Motor neuron (in vitro differentiated cells): ENCODE measurements at regions of chr12 and their contacts with region 1.

Region 1: DNA sequence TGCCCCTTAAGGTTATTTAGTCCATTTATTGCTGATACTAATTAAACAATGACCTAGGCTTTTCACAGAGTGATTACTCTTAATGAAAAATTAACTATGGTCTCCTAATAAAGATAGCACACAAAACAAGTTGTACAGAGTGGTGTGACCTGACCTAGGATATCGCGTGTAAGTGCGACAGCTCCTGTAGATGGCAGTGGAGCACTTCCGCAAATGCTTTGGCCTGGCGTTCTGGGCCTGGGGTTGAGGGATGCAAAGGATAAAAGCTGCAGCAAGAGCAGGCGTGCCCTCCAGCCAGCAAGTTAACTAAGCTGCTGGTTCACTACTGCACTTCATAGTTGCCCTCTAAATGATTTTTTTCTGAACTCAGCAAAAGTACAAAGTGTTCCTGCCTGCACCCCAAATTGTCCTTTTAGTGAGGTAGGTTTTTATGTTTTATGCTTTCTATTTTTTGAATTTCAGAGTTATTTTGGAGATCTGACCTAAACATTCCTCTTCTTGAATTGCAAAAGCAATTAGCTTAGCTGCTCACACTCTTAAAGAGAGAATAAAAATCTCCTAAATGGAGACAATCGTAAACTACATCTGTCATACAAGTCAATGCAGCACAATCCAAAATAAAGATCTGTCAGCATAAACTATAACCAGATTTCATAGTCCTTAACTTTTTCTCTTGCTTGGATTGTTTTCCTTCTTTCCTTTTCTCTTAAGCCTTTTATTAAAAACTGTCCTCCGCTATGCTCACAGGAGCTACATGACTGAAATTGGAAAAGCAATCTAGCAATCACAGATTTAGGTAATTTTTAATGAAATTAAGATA is 379.6 kb downstream of the LRIG3 start:
- ATAC-seq: peak; percentile 95 to 100 (median 99)
- H3K4me3 ChIP-seq: no peak overlapping the region
- H3K27ac ChIP-seq: no peak overlapping the region
- H3K4me1 ChIP-seq: peaks cover 0 to 8% of the 10 kb centered on the region in 2 donors

Region 2: DNA sequence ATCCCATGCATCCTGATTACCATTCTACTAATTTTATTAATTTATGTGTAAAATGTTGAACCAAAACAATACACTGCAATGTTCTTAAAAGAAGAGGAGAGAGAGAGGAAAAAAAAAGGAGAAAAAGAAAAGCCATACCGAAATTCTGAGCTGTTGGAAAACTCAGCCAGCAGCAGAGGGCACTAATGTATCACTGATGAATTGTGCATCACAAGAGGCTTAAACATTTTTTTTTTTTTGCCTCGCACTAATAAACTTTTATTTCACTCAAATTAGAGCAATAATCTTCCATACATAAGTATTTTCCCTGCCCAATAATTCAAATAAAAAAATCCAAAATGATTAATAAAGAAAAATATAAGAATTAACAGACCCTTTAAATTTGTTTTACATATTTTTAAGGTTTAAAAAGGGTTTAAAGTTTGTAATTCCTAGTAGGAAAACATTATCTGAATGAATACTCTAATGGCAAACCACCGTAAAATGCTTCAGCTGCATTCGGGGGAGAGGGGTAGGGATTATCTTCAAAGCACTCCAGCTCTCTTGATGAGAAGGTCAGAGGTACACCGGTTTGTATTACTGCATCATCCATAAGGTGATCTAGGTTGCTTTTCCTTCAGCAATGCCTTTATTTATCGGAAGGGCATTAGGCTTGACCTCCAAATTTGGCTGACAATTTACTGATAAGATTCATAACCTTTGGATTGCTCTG is 557.4 kb before region 1 on chr12:
- in situ Hi-C with region 1: loop called in 1 of 9 experiments (anchors 25 kb)
- ATAC-seq: peak in 1 of 8 experiments; percentile 23
- H3K4me3 ChIP-seq: no peak overlapping the region
- H3K27ac ChIP-seq: no peak overlapping the region
- H3K4me1 ChIP-seq: no peaks in the 10 kb centered on the region

Region 3: DNA sequence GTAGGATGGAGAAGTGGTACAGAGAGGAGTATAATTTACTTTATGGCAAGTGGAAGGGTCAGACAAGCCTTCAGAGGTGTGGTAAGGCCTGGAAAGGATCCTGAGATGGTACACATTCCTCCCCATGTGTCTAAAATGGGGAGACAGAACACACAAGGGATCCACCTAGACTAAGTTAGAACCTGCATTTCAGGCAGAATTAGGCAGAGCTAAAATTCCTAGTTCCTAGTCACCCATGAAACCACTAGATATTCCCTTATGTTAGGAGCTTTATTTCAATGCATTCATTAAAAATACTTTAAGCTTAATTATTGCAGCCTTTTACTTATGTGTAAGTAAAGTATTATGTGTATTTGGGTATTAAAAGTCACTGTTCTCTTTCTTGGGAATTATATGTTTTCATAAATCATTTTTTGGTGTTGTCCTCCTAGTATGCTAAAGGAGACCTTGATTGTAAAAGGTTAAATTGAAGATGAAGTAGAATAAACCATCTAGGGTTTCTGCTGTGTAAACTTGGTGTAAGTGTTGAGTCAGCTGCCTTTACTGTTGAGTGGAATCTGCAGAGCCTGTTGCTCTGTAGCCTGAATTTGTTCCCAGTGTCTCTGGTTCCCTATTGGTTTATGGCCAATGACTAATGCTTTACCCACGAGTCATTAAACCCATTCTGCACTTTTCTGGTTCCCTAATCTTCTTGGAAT is 176.2 kb before region 1 on chr12:
- in situ Hi-C with region 1: loop called in 3 of 9 experiments (anchors 10 to 25 kb)
- ATAC-seq: peak in 7 of 8 experiments; percentile 51 to 96 (median 60)
- H3K4me3 ChIP-seq: no peak overlapping the region
- H3K27ac ChIP-seq: no peak overlapping the region
- H3K4me1 ChIP-seq: no peaks in the 10 kb centered on the region

Region 4: GRCh38 chr12:58888131-58888783 is 347.6 kb after region 1 on chr12:
- in situ Hi-C with region 1: loop called in 1 of 9 experiments (anchors 25 kb)
- ATAC-seq: peak in 3 of 8 experiments; percentile 55 to 63 (median 57)
- H3K4me3 ChIP-seq: no peak overlapping the region
- H3K27ac ChIP-seq: no peak overlapping the region
- H3K4me1 ChIP-seq: no peaks in the 10 kb centered on the region

Region 5: GRCh38 chr12:59087077-59087673 is 546.5 kb after region 1 on chr12:
- in situ Hi-C with region 1: loop called in 3 of 9 experiments (anchors 10 to 25 kb)
- ATAC-seq: peak in 3 of 8 experiments; percentile 33 to 35 (median 33)
- H3K4me3 ChIP-seq: no peak overlapping the region
- H3K27ac ChIP-seq: no peak overlapping the region
- H3K4me1 ChIP-seq: peaks cover 0 to 13% of the 10 kb centered on the region in 2 donors

Region 6: DNA sequence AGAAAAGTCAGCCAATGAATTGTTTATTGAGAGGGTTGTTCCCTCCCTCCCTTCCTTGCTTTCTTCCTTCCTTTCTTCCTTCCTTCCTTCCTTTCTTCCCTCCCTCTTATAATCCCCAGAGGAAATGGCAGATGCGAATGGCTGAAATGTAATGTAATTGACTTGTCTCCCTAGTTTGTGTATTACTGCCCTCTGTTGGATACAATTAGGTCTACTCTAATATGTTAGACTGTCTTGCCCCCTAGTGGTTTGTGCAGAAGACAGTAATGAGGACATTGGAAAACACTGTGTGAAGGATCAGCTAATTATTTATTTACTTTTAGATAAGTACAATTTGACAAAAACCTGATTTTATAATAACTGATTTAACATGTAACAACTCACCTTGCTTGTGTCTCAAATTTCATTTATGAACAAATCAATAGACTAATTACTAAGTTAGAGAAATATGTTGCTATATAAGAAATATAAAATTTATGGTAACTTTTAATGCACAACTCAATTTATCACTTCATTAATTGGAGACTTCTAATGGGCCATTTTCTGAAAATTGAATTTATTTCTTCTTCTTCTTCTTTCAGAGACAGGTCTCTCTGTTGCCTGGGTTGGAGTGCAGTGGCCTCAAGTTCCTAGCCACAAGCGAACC is 609.4 kb after region 1 on chr12:
- in situ Hi-C with region 1: loop called in 1 of 9 experiments (anchors 25 kb)
- ATAC-seq: peak; percentile 55 to 97 (median 88)
- H3K4me3 ChIP-seq: no peak overlapping the region
- H3K27ac ChIP-seq: no peak overlapping the region
- H3K4me1 ChIP-seq: no peaks in the 10 kb centered on the region